ENCODE measurements at regions of chr3 and their contacts with region 1.

Region 1: GRCh38 chr3:17023006-17023664 is 138.4 kb downstream of the PLCL2 start:
- DNase-seq: no peak
- ATAC-seq: peak in 6 of 8 donors; percentile 32 to 82 (median 53)
- H3K4me3 ChIP-seq: no peak overlapping the region
- H3K27ac ChIP-seq: peak overlapping the region in 1 of 10 donors; percentile 29
- H3K4me1 ChIP-seq: peaks cover 0 to 18% (median 5%) of the 10 kb centered on the region in 9 donors
- H3K27me3 ChIP-seq: no peaks in the 10 kb centered on the region
- CTCF ChIP-seq: no peak

Region 2: GRCh38 chr3:16897254-16897926 is 125.7 kb before region 1 on chr3:
- intact Hi-C with region 1: loop called in 2 of 10 experiments (anchors 5 to 10 kb)
- DNase-seq: no peak
- ATAC-seq: no peak
- H3K4me3 ChIP-seq: peak overlapping the region in 4 of 10 donors; percentile 0 to 17 (median 10)
- H3K27ac ChIP-seq: peak overlapping the region; percentile 37 to 84 (median 60)
- H3K4me1 ChIP-seq: peaks cover 0 to 71% (median 55%) of the 10 kb centered on the region in 9 donors
- H3K27me3 ChIP-seq: no peaks in the 10 kb centered on the region
- CTCF ChIP-seq: no peak

Region 3: GRCh38 chr3:16906682-16907081 is 116.5 kb before region 1 on chr3:
- intact Hi-C with region 1: loop called in 1 of 10 experiments (anchors 10 kb)
- DNase-seq: no peak
- ATAC-seq: peak in 7 of 8 donors; percentile 59 to 87 (median 79)
- H3K4me3 ChIP-seq: peak overlapping the region in 1 of 10 donors; percentile 3
- H3K27ac ChIP-seq: peak overlapping the region; percentile 5 to 73 (median 43)
- H3K4me1 ChIP-seq: peaks cover 5 to 93% (median 89%) of the 10 kb centered on the region in 9 donors
- H3K27me3 ChIP-seq: no peaks in the 10 kb centered on the region
- CTCF ChIP-seq: no peak

Region 4: DNA sequence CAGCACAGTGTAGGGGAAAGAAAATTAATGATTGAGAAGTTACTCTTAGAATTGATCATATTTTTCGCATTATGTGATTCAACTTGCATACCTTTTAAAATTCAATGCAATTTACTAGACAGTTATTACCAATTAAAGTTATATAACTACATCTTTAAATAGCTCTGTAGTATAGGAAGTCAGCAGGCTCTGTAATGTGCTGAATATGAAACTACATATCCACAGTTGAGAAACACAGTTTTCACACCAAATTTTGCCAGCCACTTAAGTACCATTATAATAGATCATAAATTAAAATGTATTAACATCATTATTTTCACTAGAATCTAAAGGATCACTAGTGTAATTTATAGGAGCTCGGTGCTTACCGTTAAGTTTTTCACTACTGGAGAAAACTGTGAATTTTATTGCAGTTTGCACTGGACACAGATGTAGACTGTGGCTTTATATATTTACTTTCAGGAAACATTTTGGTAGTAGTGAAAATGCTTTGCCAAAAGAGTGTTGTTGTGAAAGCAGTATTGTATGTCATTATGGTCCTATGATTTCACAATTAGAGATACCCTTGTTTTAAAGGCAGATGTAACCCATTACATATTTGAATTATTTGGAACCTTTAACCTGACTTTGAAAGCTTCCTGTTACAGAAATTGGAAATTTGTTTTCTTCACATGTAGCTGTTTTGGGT is 24.8 kb before region 1 on chr3:
- intact Hi-C with region 1: no loop called
- DNase-seq: no peak
- ATAC-seq: no peak
- H3K4me3 ChIP-seq: no peak overlapping the region
- H3K27ac ChIP-seq: no peak overlapping the region
- H3K4me1 ChIP-seq: peaks cover 0 to 54% (median 41%) of the 10 kb centered on the region in 9 donors
- H3K27me3 ChIP-seq: no peaks in the 10 kb centered on the region
- CTCF ChIP-seq: no peak

Region 5: DNA sequence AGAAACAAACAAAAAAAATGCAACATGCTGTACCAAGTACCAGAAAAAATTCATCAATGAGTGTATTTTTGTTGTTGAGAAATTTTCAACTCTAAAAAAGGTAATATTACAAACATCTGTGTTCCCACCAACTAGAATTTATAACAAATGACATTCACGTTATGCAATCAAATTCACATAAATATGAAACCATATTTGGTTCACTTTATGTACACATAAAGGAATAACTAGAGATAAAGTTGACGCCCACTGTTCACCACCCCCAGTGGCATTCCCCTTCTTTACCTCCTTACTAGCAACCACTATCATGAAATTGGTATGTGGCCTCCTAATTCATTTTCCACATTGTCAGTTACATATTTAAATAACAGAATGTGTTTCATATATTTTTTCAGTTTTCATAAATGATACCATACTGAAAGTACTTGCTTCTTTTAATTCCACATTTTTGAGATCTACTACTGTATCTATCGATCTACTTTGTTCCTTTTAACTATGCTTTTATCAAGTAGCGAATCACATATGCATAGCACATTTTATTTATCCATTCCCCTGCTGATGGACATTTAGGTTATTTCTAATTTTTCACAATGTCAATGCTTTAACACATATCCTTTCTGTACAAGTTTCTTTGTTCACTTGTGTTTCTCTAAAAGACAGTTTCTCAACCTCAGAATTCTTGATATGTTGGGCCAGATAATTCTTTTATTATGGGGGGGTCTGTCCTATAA is 684.8 kb after region 1 on chr3:
- intact Hi-C with region 1: no loop called
- DNase-seq: no peak
- ATAC-seq: no peak
- H3K4me3 ChIP-seq: no peak overlapping the region
- H3K27ac ChIP-seq: peak overlapping the region in 1 of 10 donors; percentile 11
- H3K4me1 ChIP-seq: peaks cover 0 to 19% (median 6%) of the 10 kb centered on the region in 9 donors
- H3K27me3 ChIP-seq: no peaks in the 10 kb centered on the region
- CTCF ChIP-seq: no peak